ENCODE measurements at regions of chr7 and their contacts with region 1.

Region 1: DNA sequence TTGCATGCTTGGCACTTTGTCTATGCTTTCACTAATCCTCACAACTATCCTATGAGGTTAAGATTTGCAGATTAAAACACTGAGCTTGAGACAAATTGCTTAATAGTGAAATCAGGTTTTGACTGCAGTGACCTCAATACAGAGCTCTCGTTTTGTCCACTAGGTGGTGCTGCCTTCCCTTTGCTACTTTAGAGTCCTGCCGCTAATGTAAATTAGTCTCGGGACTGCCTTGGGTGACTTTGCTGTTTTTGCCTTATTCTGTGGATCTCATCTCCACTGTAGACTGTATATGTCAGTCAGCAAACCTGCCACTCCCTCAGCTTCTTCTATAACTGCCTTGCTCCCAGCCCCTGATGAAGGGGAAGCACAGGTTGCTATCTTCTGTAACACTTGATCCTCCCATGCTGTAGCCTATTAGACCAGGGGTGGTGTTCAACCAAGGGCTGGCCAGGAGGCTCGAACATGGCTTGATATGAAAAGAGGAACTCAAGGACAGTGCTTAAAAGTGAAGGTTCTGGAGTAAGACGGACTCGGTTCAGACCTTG is 26.0 kb downstream of the ASB4 start:
- DNase-seq: peak; percentile 55

Region 2: DNA sequence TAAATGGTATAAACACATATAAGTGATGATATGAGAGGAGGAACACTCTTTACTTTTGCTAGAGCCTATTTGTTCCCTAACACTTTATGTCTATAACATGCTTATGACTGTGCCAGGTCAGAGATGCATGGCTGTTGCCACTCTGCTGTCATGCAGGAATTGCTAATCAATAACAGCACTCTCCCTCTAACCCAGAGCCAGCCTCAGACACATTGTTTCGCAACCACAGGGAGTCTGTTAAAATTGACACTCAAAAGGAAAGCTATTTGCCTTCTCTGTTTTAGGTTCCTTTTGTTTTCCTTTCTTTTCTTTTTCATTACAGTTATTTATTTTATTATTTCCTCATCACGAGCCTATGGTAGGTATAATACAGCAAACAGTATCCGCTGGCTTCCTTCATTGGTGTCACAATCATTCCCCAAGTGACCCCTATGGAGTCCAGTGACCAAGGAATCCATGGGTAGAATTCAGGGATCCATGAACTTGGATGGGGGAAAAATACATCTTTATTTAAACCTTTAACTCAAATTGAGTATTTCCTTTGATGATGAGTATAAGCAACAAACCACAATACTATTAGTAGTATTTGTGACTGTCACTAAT is 83.8 kb before region 1 on chr7:
- CTCF ChIA-PET with region 1: no interaction called
- POLR2A ChIA-PET with region 1: no interaction called
- DNase-seq: no peak

Region 3: GRCh38 chr7:95501261-95501832 is 10.4 kb before region 1 on chr7:
- CTCF ChIA-PET with region 1: interaction called, 12 read pairs
- POLR2A ChIA-PET with region 1: no interaction called
- DNase-seq: no peak

Region 4: GRCh38 chr7:95527033-95527775 is 15.4 kb after region 1 on chr7:
- CTCF ChIA-PET with region 1: interaction called, 14 read pairs
- POLR2A ChIA-PET with region 1: no interaction called
- DNase-seq: peak; percentile 80

Region 5: DNA sequence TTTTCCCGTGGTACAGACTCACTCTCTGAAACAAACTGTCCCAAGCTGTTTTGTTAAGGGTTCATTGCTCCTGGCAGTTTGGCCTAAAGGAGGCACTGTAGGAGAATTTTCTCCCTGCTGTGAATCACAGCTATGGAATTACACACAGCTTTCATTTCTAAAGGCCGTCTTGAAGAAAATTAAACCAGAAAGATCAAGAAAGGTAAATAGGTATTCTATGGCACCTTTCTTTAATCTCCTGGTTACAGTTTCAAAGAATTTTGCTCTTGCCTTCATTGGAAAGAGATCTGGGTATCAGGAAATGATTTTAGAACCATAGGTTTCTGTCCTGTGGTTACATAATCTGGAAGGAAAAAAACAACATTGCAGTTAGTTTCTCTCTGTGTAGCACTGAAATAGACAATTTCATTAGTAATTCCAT is 33.3 kb after region 1 on chr7:
- CTCF ChIA-PET with region 1: interaction called, 12 read pairs
- POLR2A ChIA-PET with region 1: no interaction called
- DNase-seq: peak; percentile 45

Region 6: DNA sequence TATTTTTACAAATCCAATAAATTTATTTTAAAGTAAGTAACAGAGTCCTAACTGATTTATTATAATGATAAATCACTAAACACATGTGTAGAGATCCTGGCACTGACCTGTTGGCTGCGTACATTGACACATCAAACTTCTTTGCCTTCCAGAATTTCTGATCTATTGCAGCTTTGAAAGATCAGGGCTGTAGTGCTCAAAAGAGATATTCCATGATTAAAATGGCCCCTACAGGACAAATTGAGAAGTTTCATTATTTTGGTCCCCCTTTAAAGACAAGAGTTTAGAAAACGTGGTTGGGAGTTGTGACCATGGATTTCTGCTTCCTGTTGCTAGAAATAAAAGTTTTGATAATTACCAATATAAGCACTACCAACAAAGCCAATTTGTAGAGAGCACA is 172.2 kb after region 1 on chr7:
- CTCF ChIA-PET with region 1: interaction called, 73 read pairs
- POLR2A ChIA-PET with region 1: interaction called, 3 read pairs
- DNase-seq: peak; percentile 14

Region 7: GRCh38 chr7:95690367-95690947 is 178.7 kb after region 1 on chr7:
- CTCF ChIA-PET with region 1: interaction called, 73 read pairs
- POLR2A ChIA-PET with region 1: interaction called, 3 read pairs
- DNase-seq: peak; percentile 20

Measured in HEK293T (cell line).